ENCODE measurements at regions of chr6 and their contacts with region 1.

Region 1: GRCh38 chr6:110179401-110180227 is at the start of gene WASF1:
- DNase-seq: peak; percentile 95
- H3K4me3 Mint-ChIP-seq: no peak within 1 kb of the TSS
- H3K27ac Mint-ChIP-seq: no peak within 1 kb of the TSS
- H3K4me1 Mint-ChIP-seq: no peaks in the 10 kb centered on the region
- H3K27me3 Mint-ChIP-seq: no peaks in the 10 kb centered on the region
- CTCF ChIP-seq: no peak
- total RNA-seq, gene WASF1: 11.3 and 12.7 TPM in 2 replicates

Region 2: GRCh38 chr6:110360676-110361075 is 181.1 kb after region 1 on chr6:
- CTCF ChIA-PET with region 1: no interaction called
- intact Hi-C with region 1: loop called (anchors 1 kb)
- DNase-seq: peak; percentile 39
- H3K4me3 Mint-ChIP-seq: no peak overlapping the region
- H3K27ac Mint-ChIP-seq: peak overlapping the region; percentile 13
- H3K4me1 Mint-ChIP-seq: peaks cover 30% of the 10 kb centered on the region
- H3K27me3 Mint-ChIP-seq: peaks cover 74% of the 10 kb centered on the region
- CTCF ChIP-seq: no peak